Endothelial cell of umbilical vein (primary cell): ENCODE measurements at regions of chr12 and their contacts with region 1.

Region 1: DNA sequence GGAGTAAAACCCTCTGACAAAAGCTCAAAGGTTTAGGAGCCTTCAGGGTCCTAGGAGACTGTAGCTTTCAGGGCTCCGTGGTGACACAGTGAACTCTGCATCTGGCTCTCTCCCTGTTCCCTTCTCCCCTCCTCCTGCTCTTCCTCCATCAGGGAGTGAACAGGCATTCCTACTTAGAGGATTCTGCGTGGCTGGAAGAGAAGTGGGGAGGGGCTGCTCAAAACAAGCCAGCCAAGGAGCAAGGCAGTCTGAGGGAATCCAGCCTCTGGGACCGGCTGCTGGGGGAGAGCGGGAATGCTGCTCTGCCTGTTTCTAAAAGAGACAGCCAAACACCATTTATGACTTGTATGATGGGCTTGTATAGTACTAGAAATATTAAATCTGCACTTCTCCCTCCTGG is 49.5 kb downstream of the RBMS2 start:
- DNase-seq: no peak
- H3K4me3 ChIP-seq: no peak overlapping the region
- H3K27ac ChIP-seq: no peak overlapping the region
- H3K4me1 ChIP-seq: peaks cover 12% of the 10 kb centered on the region
- H3K27me3 ChIP-seq: no peaks in the 10 kb centered on the region
- CTCF ChIP-seq: no peak
- POLR2A ChIP-seq: no peak

Region 2: DNA sequence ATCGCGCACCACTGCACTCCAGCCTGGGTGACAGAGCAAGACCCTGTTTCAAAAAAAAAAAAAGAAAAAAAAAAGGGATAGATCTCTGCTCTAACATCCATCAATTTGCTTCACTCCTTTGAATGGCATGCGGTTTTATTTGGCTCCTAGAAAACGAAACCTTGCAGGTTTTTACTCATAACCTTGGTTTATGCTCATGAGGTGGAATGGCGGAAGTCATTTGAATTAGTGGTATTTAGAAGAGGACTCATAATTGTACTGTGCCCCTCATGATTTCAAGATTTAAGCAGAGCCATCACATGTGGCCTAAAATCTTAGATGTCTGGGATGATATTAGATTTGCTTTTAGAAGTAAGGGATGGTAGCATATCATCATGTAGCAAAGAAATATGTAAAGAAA is 20.1 kb before region 1 on chr12:
- CTCF ChIA-PET with region 1: interaction called, 10 read pairs
- POLR2A ChIA-PET with region 1: interaction called, 3 read pairs
- dilution Hi-C with region 1: no loop called
- intact Hi-C with region 1: no loop called
- DNase-seq: no peak
- H3K4me3 ChIP-seq: no peak overlapping the region
- H3K27ac ChIP-seq: no peak overlapping the region
- H3K4me1 ChIP-seq: no peaks in the 10 kb centered on the region
- H3K27me3 ChIP-seq: no peaks in the 10 kb centered on the region
- CTCF ChIP-seq: no peak
- POLR2A ChIP-seq: no peak

Region 3: DNA sequence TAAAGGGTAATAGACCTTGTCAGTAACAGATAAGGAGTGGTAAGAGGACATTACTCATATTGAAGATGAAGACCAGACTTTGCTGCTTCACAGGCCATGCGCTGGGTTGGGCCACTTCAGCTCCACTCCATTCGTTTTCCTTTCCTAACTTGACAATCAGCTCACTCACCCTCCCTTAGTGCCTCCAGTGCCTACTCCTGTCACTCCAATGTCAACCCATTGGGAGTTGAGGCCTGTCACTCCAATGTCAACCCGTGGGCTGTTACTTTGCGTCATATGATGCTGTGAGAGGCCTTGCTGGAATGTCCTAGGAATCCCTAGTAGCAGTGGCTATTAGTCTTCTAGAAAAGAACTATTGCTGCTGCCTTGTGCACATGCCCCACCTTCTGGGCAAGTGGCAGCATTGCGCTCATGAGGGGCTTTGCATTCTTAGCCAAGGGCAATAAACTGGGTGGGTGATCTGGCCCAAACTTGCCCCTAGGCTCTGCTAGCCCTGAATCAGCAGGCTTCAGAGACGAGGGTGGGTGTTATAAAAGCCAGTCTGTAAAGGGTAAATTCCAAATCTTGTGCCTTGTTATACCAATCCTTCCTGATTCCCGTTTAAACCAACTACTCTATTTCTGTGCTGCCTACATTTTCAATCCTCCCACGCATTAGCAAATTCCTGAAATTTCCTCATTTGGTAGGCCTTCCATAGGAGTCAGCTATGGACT is 22.9 kb after region 1 on chr12:
- CTCF ChIA-PET with region 1: interaction called, 16 read pairs
- POLR2A ChIA-PET with region 1: no interaction called
- dilution Hi-C with region 1: no loop called
- intact Hi-C with region 1: loop called (anchors 2 kb)
- DNase-seq: peak; percentile 75
- H3K4me3 ChIP-seq: no peak overlapping the region
- H3K27ac ChIP-seq: peak overlapping the region; percentile 3
- H3K4me1 ChIP-seq: no peaks in the 10 kb centered on the region
- H3K27me3 ChIP-seq: no peaks in the 10 kb centered on the region
- CTCF ChIP-seq: peak; percentile 83 to 87
- POLR2A ChIP-seq: peak; percentile 35

Region 4: DNA sequence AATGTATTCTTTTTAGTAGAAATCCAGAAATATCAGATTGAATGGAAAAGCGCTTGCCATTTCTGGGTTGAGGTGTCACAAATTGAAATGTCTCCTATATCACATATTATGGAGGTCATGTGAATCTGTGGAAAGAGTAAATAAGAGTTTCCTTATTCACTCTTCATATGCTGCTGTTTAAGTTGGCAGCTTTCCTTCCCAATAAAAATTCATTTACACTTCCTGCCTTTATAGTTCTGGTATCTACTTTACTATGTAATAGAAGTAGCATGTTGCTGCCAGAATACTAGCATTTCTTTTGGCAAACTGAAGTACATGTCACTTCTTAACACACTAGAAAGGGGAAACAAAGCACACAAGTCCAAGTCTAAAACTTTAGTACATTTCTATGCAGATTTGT is 302.3 kb after region 1 on chr12:
- CTCF ChIA-PET with region 1: no interaction called
- POLR2A ChIA-PET with region 1: no interaction called
- dilution Hi-C with region 1: no loop called
- intact Hi-C with region 1: no loop called
- DNase-seq: peak; percentile 24
- H3K4me3 ChIP-seq: no peak overlapping the region
- H3K27ac ChIP-seq: no peak overlapping the region
- H3K4me1 ChIP-seq: no peaks in the 10 kb centered on the region
- H3K27me3 ChIP-seq: peaks cover 3 to 8% of the 10 kb centered on the region in 2 experiments
- CTCF ChIP-seq: no peak
- POLR2A ChIP-seq: no peak